ENCODE measurements at regions of chr3 and their contacts with region 1.

Region 1: DNA sequence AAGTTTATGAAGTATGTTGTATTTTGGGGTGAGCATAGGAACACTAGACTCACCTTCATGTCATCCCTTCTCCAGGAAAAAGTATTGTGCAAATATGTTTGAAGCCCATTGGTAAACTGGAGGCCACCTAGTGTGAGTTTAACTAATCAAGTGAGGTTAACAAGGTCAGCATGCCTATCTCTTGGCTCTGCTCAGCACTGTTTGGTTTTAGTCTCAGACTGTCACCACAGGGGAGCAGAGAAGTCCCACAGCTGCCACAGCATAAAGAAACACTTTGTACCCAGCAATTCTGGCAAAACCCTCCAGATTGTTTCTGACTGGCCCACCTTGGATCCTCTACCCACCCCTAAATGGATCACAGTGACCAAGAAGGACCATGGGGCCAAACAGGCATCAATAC is 152.7 kb downstream of the FEZF2 start:
- DNase-seq: no peak
- H3K4me3 ChIP-seq: no peak overlapping the region
- H3K27ac ChIP-seq: no peak overlapping the region
- H3K4me1 ChIP-seq: no peaks in the 10 kb centered on the region
- H3K27me3 ChIP-seq: no peaks in the 10 kb centered on the region
- CTCF ChIP-seq: no peak
- EP300 ChIP-seq: no peak
- POLR2A ChIP-seq: no peak

Region 2: DNA sequence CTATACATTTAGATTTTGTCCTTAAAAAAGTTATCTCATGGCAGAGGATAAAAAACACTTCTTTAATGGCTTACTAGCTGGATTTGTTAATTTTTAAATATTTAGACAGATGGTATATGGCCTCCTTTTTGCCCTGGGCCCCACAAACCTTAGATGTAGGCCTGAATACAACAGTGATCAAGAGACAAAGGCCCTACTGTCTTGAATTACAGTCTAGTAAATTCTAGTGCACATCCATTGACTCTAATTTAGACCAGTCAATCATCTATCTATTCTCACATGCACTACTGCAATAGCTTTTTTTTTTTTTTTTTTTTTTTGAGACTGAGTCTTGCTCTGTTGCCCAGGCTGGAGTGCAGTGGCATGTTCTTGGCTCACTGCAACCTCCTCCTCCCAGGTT is 1422.2 kb before region 1 on chr3:
- in situ Hi-C with region 1: no loop called
- intact Hi-C with region 1: loop called (anchors 5 kb)
- DNase-seq: no peak
- H3K4me3 ChIP-seq: no peak overlapping the region
- H3K27ac ChIP-seq: no peak overlapping the region
- H3K4me1 ChIP-seq: no peaks in the 10 kb centered on the region
- H3K27me3 ChIP-seq: no peaks in the 10 kb centered on the region
- CTCF ChIP-seq: no peak
- EP300 ChIP-seq: no peak
- POLR2A ChIP-seq: no peak

Region 3: GRCh38 chr3:61650276-61650675 is 570.3 kb before region 1 on chr3:
- in situ Hi-C with region 1: no loop called
- intact Hi-C with region 1: no loop called
- DNase-seq: peak; percentile 49
- H3K4me3 ChIP-seq: no peak overlapping the region
- H3K27ac ChIP-seq: peak overlapping the region; percentile 28 to 83 (median 62)
- H3K4me1 ChIP-seq: peaks cover 6 to 44% (median 24%) of the 10 kb centered on the region in 4 donors
- H3K27me3 ChIP-seq: no peaks in the 10 kb centered on the region
- CTCF ChIP-seq: no peak
- EP300 ChIP-seq: no peak
- POLR2A ChIP-seq: no peak

Region 4: DNA sequence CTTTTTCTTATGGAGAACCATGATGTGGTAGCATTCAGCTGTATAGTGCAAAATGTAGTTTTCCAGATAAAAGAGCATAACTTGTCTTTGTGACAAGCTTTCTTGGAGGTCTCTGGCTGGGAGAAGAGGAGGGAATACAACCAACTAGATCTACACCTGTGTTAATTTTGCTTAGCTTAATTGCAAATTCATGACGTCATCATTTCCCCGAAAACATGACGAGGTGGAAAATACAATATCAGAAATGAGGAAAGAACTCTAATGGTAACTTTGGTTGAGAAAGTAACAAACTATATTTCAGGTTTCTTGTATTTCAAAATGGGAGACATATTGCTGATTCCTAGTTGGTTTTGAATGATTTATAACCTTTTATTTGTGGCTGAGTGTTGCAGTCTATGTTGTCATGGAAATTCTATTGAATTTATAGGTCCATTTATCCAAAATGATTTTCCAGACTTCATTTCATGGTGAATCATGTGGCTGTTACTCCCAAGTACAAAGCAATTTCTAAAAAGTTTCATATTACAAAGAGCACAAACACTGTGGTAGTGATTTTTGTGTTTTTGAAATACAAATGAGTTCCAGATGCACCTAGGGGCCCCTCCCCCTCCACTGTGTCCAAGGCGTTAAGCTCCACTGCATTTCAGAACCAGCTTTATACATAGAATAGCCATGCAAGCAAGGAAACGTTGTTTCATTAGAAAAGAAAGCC is 154.5 kb before region 1 on chr3:
- in situ Hi-C with region 1: no loop called
- intact Hi-C with region 1: no loop called
- DNase-seq: no peak
- H3K4me3 ChIP-seq: no peak overlapping the region
- H3K27ac ChIP-seq: no peak overlapping the region
- H3K4me1 ChIP-seq: no peaks in the 10 kb centered on the region
- H3K27me3 ChIP-seq: no peaks in the 10 kb centered on the region
- CTCF ChIP-seq: no peak
- EP300 ChIP-seq: no peak
- POLR2A ChIP-seq: no peak